ENCODE measurements at regions of chr2 and their contacts with region 1.

Region 1: GRCh38 chr2:152036611-152037469 is 62.0 kb downstream of the CACNB4 start:
- DNase-seq: peak; percentile 33 to 70
- ATAC-seq: peak in 7 of 8 donors; percentile 61 to 81 (median 70)
- H3K4me3 ChIP-seq: no peak overlapping the region
- H3K27ac ChIP-seq: no peak overlapping the region
- H3K4me1 ChIP-seq: peaks cover 4 to 31% (median 24%) of the 10 kb centered on the region in 9 donors
- H3K27me3 ChIP-seq: no peaks in the 10 kb centered on the region
- CTCF ChIP-seq: peak; percentile 56 to 93 (median 84)

Region 2: DNA sequence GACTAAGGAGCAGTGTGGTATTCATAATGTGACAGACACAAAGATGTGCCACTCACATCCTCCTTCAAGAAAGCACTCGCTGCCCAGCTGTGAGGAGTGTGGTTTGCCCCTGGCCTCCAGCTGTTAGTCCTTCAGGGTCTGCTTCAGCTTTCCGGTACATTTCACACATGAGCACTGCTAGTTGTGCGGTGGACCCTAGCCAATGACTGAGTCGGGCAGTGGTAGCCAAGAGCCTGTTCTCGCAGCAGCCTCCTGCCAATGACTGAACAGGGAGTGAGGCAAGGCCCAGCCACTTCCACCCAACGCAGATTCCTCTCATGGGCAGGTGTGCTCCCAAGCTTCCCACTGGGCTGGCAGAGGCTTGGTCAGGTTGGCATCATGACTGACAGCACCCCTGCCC is 1029.5 kb before region 1 on chr2:
- intact Hi-C with region 1: no loop called
- DNase-seq: peak in 1 of 2 donors; percentile 38
- ATAC-seq: peak in 3 of 8 donors; percentile 38 to 67 (median 62)
- H3K4me3 ChIP-seq: no peak overlapping the region
- H3K27ac ChIP-seq: no peak overlapping the region
- H3K4me1 ChIP-seq: no peaks in the 10 kb centered on the region
- H3K27me3 ChIP-seq: no peaks in the 10 kb centered on the region
- CTCF ChIP-seq: no peak

Region 3: DNA sequence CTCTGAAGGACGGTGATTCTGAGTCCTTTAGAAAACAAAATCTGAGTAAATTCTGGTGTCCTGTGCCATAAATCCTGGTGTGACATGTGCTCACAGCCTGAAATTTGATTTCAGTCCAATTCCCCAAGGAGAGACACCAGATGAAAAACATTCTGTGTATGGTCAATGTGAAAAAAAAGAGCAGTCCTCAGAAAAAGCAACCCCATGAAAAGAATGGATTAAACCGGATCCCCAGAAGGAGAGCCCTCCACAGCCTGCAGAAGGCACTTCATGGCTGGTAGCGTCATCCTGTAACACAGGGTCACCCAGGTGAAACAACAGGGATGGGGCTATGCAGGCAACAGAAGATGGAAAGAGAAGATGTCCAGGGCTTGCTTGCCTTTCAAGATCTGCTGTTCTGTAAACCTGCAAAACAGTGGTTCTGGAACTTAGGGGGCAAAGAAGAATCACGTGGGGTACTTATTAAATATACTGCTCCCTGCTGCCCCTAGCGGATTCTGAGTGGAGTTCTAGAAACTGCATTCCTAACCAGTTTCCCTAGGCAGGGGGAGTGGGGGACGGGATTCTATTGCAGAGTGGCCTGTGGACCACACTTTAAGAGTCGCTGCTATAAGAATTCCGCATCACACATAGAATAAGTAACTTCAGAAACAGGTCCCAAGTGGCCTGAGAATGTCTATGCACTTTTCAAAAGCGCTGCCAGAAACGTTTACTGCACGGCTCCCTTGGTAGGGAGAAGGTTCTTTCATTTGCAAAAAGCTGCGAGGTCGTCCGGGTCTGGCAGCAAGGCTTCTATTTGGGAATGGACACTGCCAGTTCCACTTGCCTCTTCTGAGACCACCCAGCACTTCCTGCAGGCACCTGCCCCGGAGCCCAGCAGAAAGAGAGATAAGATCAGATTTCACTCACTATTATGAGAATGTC is 89.7 kb before region 1 on chr2:
- intact Hi-C with region 1: no loop called
- DNase-seq: peak in 1 of 2 donors; percentile 48
- ATAC-seq: peak; percentile 50 to 87 (median 79)
- H3K4me3 ChIP-seq: peak overlapping the region in 9 of 10 donors; percentile 10 to 48 (median 38)
- H3K27ac ChIP-seq: peak overlapping the region in 2 of 10 donors; percentile 31 to 35
- H3K4me1 ChIP-seq: peaks cover 0 to 23% (median 11%) of the 10 kb centered on the region in 9 donors
- H3K27me3 ChIP-seq: no peaks in the 10 kb centered on the region
- CTCF ChIP-seq: peak; percentile 33 to 72 (median 66)

Region 4: DNA sequence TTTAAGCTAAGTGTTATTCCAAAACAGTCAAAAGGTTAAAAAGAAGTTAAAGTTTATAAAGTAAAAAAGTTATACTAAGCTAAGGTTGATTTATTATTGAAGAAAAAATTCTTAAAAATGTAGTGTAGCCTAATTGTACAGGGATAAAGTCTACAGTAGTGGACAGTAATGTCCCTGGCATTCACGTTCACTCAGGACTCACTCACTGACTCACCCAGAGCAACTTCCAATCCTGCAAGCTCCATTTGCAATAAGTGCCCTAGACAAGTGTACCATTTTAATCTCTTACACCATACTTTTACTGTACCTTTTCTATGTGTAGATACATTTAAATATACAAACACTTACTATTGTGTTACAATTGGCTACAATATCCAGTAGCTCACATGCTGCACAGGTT is 24.1 kb before region 1 on chr2:
- intact Hi-C with region 1: no loop called
- DNase-seq: no peak
- ATAC-seq: no peak
- H3K4me3 ChIP-seq: no peak overlapping the region
- H3K27ac ChIP-seq: no peak overlapping the region
- H3K4me1 ChIP-seq: no peaks in the 10 kb centered on the region
- H3K27me3 ChIP-seq: no peaks in the 10 kb centered on the region
- CTCF ChIP-seq: no peak

Region 5: GRCh38 chr2:152097801-152098495 is 61.1 kb after region 1 on chr2:
- intact Hi-C with region 1: loop called in 1 of 10 experiments (anchors 5 kb)
- DNase-seq: peak; percentile 5 to 29
- ATAC-seq: peak; percentile 54 to 82 (median 72)
- H3K4me3 ChIP-seq: peak overlapping the region; percentile 50 to 82 (median 66)
- H3K27ac ChIP-seq: peak overlapping the region in 1 of 10 donors; percentile 6
- H3K4me1 ChIP-seq: peaks cover 0 to 27% (median 13%) of the 10 kb centered on the region in 9 donors
- H3K27me3 ChIP-seq: peaks cover 0 to 52% (median 16%) of the 10 kb centered on the region in 7 donors
- CTCF ChIP-seq: no peak

Region 6: GRCh38 chr2:152115952-152116351 is 79.1 kb after region 1 on chr2:
- intact Hi-C with region 1: loop called in 1 of 10 experiments (anchors 5 kb)
- DNase-seq: no peak
- ATAC-seq: no peak
- H3K4me3 ChIP-seq: no peak overlapping the region
- H3K27ac ChIP-seq: no peak overlapping the region
- H3K4me1 ChIP-seq: no peaks in the 10 kb centered on the region
- H3K27me3 ChIP-seq: no peaks in the 10 kb centered on the region
- CTCF ChIP-seq: peak in 4 of 9 donors; percentile 6 to 28 (median 10)

Region 7: GRCh38 chr2:152175458-152176325 is 138.9 kb after region 1 on chr2 and contains the start of gene STAM2:
- intact Hi-C with region 1: loop called (anchors 2 to 10 kb)
- DNase-seq: peak; percentile 92 to 95
- ATAC-seq: peak; percentile 91 to 98 (median 96)
- H3K4me3 ChIP-seq: peak within 1 kb of the TSS; percentile 56 to 98 (median 76)
- H3K27ac ChIP-seq: peak within 1 kb of the TSS; percentile 92 to 99 (median 96)
- H3K4me1 ChIP-seq: peaks cover 2 to 46% (median 31%) of the 10 kb centered on the region in 9 donors
- H3K27me3 ChIP-seq: no peaks in the 10 kb centered on the region
- CTCF ChIP-seq: peak; percentile 87 to 99 (median 97)
- total RNA-seq, gene STAM2: 22.4 to 35.9 (median 27.2) TPM

Region 8: GRCh38 chr2:152186262-152186661 is 149.4 kb after region 1 on chr2:
- intact Hi-C with region 1: no loop called
- DNase-seq: no peak
- ATAC-seq: no peak
- H3K4me3 ChIP-seq: no peak overlapping the region
- H3K27ac ChIP-seq: no peak overlapping the region
- H3K4me1 ChIP-seq: no peaks in the 10 kb centered on the region
- H3K27me3 ChIP-seq: peaks cover 0 to 12% (median 0%) of the 10 kb centered on the region in 7 donors
- CTCF ChIP-seq: no peak

Region 9: GRCh38 chr2:153519257-153519875 is 1482.5 kb after region 1 on chr2:
- intact Hi-C with region 1: loop called in 2 of 10 experiments (anchors 10 kb)
- DNase-seq: peak in 1 of 2 donors; percentile 20
- ATAC-seq: no peak
- H3K4me3 ChIP-seq: no peak overlapping the region
- H3K27ac ChIP-seq: no peak overlapping the region
- H3K4me1 ChIP-seq: no peaks in the 10 kb centered on the region
- H3K27me3 ChIP-seq: peaks cover 0 to 3% (median 0%) of the 10 kb centered on the region in 7 donors
- CTCF ChIP-seq: peak; percentile 54 to 86 (median 70)

Measured in heart right ventricle (tissue), 16 donors.